Gastrocnemius medialis (tissue), 4 donors: ENCODE measurements at regions of chr7 and their contacts with region 1.

Region 1: DNA sequence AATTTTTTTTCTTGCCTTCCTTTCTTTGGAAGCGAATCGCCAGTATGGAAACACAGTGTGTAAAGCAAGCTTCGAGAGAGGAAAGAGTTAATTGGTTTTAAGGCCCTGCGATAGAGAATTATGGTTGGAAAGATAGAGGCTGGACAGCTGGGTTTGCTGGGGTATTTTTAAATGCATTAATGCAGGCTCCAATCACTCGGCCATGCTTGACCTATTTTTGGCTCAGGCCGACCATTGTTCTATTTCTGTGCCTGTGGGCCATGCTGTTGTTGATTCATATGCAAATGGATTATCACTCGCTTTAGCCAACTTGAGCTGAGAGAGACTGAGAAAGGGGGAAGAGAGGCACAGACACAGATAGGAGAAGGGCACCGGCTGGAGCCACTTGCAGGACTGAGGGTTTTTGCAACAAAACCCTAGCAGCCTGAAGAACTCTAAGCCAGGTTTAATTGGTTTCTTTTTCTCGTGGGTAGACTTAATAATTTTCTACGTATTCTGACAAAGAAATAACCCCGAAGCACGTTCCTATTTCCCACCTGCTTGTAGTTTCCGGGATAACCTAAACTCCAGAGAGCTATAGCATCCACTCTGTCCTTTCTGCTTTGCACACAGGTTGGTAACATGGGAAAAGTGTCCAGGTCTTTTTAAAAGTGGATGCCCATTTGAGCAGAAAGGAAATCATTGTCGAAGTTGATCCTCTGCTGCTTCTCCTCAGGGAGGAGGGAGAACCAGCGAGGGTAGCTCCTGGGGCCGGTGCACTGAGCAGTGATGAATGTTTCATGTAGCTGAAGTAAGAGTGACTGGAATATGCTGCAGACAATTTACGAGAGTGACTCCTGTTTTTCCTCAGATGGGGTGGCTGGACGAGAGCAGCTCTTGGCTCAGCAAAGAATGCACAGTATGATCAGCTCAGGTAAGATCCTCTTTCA is at the start of gene HDAC9:
- DNase-seq: peak; percentile 56 to 72
- ATAC-seq: peak; percentile 91 to 94
- H3K4me3 ChIP-seq: peak within 1 kb of the TSS; percentile 60 to 68 (median 64)
- H3K27ac ChIP-seq: peak within 1 kb of the TSS; percentile 84 to 91 (median 90)
- H3K4me1 ChIP-seq: peaks cover 58 to 62% of the 10 kb centered on the region in 2 donors
- H3K27me3 ChIP-seq: no peaks in the 10 kb centered on the region
- CTCF ChIP-seq: no peak
- POLR2A ChIP-seq: peak; percentile 45 to 78
- total RNA-seq, gene HDAC9: 3.0 to 14.0 (median 5.6) TPM

Region 2: GRCh38 chr7:17934094-17934493 is 561.6 kb before region 1 on chr7:
- in situ Hi-C with region 1: no loop called
- intact Hi-C with region 1: no loop called
- DNase-seq: no peak
- ATAC-seq: no peak
- H3K4me3 ChIP-seq: no peak overlapping the region
- H3K27ac ChIP-seq: no peak overlapping the region
- H3K4me1 ChIP-seq: peaks cover 73 to 81% of the 10 kb centered on the region in 2 donors
- H3K27me3 ChIP-seq: no peaks in the 10 kb centered on the region
- CTCF ChIP-seq: no peak
- POLR2A ChIP-seq: no peak

Region 3: GRCh38 chr7:18352339-18353255 is 143.1 kb before region 1 on chr7:
- in situ Hi-C with region 1: no loop called
- intact Hi-C with region 1: loop called (anchors 5 kb)
- DNase-seq: peak in 1 of 2 donors; percentile 17
- ATAC-seq: peak; percentile 74 to 80
- H3K4me3 ChIP-seq: no peak overlapping the region
- H3K27ac ChIP-seq: no peak overlapping the region
- H3K4me1 ChIP-seq: peaks cover 0 to 11% of the 10 kb centered on the region in 2 donors
- H3K27me3 ChIP-seq: no peaks in the 10 kb centered on the region
- CTCF ChIP-seq: peak; percentile 16 to 63 (median 52)
- POLR2A ChIP-seq: no peak

Region 4: DNA sequence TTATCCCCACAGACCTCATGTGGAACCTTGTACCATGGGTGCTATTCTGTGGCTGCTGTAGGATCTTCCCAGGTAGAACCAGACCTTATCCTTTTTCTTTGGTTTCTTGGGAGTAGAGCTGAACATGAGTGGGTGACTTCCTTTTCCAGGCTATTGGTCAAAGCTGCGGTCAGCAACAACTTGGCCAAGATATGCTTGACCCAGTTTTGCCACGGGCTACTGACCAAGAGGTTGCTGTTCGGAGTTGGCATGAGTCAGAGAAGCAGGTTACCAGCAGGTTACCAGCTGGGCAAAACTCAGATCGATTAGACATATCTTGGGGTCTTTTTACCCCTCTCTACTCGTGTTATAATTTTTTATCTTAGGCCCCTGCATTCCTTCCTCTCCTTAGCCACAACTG is 36.8 kb before region 1 on chr7:
- in situ Hi-C with region 1: no loop called
- intact Hi-C with region 1: loop called (anchors 5 kb)
- DNase-seq: peak; percentile 51 to 70
- ATAC-seq: peak; percentile 99
- H3K4me3 ChIP-seq: peak overlapping the region in 1 of 4 donors; percentile 5
- H3K27ac ChIP-seq: peak overlapping the region in 3 of 4 donors; percentile 24 to 45 (median 43)
- H3K4me1 ChIP-seq: peaks cover 20 to 21% of the 10 kb centered on the region in 2 donors
- H3K27me3 ChIP-seq: no peaks in the 10 kb centered on the region
- CTCF ChIP-seq: no peak
- POLR2A ChIP-seq: no peak

Region 5: GRCh38 chr7:18538554-18539250 is 43.0 kb after region 1 on chr7:
- in situ Hi-C with region 1: no loop called
- intact Hi-C with region 1: loop called (anchors 5 kb)
- DNase-seq: no peak
- ATAC-seq: no peak
- H3K4me3 ChIP-seq: no peak overlapping the region
- H3K27ac ChIP-seq: peak overlapping the region; percentile 20 to 69 (median 41)
- H3K4me1 ChIP-seq: peaks cover 49 to 51% of the 10 kb centered on the region in 2 donors
- H3K27me3 ChIP-seq: no peaks in the 10 kb centered on the region
- CTCF ChIP-seq: no peak
- POLR2A ChIP-seq: no peak

Region 6: GRCh38 chr7:18570890-18571478 is 75.3 kb after region 1 on chr7:
- in situ Hi-C with region 1: no loop called
- intact Hi-C with region 1: loop called (anchors 2 kb)
- DNase-seq: no peak
- ATAC-seq: peak; percentile 52 to 63
- H3K4me3 ChIP-seq: no peak overlapping the region
- H3K27ac ChIP-seq: no peak overlapping the region
- H3K4me1 ChIP-seq: peaks cover 14% of the 10 kb centered on the region in 2 donors
- H3K27me3 ChIP-seq: no peaks in the 10 kb centered on the region
- CTCF ChIP-seq: peak in 4 of 5 experiments; percentile 36 to 62 (median 38)
- POLR2A ChIP-seq: no peak